GM18951 (cell line): ENCODE measurements at regions of chr7 and their contacts with region 1.

Region 1: DNA sequence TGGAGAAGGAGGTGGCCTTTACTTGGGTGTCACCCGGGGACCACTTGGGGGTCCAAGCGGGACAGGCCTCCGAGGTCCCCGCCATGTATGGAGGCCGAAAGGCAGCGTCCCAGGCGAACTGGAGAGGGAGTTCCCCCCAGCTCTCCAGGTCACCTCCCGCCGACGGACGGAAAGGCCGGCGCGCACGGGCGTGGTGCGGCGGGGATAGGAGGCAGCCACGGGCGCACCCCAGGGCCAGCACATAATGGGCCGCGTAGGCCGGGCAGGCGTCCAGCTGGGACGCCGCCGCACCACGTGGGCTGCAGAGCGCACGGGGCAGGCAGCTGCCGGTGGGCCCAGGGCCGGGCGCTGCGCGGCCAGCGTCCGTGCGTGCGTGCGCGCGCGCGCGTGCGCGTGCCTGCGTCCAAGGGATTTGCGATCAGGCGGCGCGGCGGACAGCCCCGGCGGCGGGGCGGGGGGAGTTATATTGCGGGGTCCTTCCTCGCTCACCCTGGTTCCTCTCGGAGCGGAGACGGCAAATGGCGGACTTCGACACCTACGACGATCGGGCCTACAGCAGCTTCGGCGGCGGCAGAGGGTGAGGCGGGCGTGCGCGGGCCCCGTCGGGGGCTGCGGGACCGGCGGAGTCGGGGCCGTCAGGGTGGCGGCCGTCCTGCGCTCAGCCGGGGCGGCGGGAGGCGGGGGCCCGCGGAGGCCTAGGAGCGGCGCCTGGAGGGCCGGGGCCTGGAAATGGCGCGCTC is at the start of gene EIF4H:
- POLR2A ChIP-seq: peak; percentile 96

Region 2: DNA sequence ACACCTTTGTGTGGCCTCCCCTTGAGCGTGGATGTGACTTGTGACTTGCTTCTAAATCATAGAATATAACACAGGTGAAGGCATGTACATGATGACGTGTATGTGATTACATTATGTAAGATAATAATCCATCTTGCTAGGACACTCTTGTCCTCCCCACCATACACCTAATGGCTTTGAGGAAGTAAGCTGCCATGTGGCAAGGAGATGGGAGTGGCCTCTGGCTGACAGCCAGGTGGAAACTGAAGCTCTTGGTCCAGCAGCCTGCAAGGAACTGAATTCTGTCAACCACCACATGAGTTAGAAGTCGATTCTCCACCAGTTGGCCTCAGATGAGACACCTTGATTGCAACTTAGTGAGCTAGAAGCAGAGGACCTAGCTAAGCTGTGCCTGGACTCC is 213.5 kb before region 1 on chr7:
- in situ Hi-C with region 1: no loop called
- POLR2A ChIP-seq: no peak

Region 3: DNA sequence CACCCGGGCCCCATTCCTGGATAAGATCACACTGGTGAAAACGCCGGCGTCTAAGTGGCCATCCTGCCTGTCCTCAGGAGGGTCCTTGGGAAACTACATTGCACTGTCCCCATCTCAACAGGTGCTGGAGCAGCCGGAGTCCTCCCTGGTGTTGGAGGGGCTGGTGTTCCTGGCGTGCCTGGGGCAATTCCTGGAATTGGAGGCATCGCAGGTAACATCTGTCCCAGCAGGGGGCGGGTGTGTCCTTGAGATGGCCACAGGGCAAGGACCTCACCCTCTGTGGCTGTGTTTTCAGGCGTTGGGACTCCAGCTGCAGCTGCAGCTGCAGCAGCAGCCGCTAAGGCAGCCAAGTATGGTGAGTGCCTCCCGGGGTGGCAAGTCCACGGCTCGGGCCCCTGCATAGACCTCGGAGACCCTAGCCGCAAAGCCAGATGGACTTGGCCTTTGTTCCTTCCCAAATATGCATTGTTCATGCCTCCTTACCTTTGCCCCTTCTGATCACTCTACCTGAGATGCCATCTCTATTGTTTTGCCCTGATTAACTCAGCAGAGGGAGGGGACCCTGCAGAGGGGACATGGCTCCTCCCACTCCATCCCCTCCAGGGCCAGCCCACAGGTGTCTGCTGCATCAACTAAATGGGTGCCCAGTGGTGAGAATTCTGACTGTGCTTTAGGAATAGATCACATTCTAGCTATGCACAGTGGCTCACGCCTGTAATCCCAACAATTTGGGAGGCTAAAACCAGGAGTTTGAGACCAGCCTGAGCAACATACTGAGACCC is 122.2 kb before region 1 on chr7:
- in situ Hi-C with region 1: loop called (anchors 10 kb)
- POLR2A ChIP-seq: no peak

Region 4: DNA sequence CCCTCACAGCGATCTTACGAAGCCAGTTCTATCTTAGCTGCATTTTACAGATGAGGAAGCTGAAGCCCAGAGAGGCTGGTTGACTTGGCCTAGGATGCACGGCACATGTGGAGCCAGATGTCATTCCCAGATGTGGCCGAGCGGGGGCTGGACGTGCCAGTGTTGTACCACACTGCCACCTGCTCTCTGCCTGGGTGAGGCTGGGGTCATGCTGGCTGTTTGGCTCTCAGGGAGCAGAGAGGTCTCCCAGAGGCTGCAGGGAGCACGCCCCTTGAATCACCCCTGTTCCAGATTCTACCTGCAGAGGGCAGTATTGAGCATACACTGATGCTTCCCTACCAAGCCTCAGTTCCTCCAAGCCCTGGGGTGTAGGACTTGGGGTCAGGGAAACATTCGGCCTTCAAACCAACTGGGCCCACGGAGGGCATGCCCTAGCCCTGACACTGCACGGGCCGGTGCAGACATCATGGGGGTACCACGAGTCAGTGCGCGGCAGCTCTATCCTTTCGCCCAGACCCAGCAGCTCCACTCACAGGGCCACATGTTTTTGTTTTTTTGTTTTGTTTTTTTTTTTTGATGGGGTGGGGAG is 275.9 kb after region 1 on chr7:
- in situ Hi-C with region 1: no loop called
- POLR2A ChIP-seq: no peak